Dendritic cell treated with granulocyte-macrophage colony-stimulating factor and Interleukin-4, amounts not matched to agents 40 ng/mL and 50 ng/mL, for 4 days (primary cell): ENCODE measurements at regions of chr22 and their contacts with region 1.

Region 1: GRCh38 chr22:22748297-22748743 is 103.9 kb downstream of the GGTLC2 start:
- H3K4me3 Mint-ChIP-seq: no peak overlapping the region
- H3K27ac Mint-ChIP-seq: no peak overlapping the region
- H3K4me1 Mint-ChIP-seq: peaks cover 18% of the 10 kb centered on the region
- H3K27me3 Mint-ChIP-seq: peaks cover 15% of the 10 kb centered on the region

Region 2: GRCh38 chr22:22593964-22594656 is 154.2 kb before region 1 on chr22:
- intact Hi-C with region 1: loop called (anchors 5 kb)
- H3K4me3 Mint-ChIP-seq: no peak overlapping the region
- H3K27ac Mint-ChIP-seq: no peak overlapping the region
- H3K4me1 Mint-ChIP-seq: peaks cover 5% of the 10 kb centered on the region
- H3K27me3 Mint-ChIP-seq: peaks cover 2% of the 10 kb centered on the region

Region 3: GRCh38 chr22:22666307-22667091 is 81.8 kb before region 1 on chr22:
- intact Hi-C with region 1: no loop called
- H3K4me3 Mint-ChIP-seq: no peak overlapping the region
- H3K27ac Mint-ChIP-seq: no peak overlapping the region
- H3K4me1 Mint-ChIP-seq: no peaks in the 10 kb centered on the region
- H3K27me3 Mint-ChIP-seq: peaks cover 3% of the 10 kb centered on the region

Region 4: DNA sequence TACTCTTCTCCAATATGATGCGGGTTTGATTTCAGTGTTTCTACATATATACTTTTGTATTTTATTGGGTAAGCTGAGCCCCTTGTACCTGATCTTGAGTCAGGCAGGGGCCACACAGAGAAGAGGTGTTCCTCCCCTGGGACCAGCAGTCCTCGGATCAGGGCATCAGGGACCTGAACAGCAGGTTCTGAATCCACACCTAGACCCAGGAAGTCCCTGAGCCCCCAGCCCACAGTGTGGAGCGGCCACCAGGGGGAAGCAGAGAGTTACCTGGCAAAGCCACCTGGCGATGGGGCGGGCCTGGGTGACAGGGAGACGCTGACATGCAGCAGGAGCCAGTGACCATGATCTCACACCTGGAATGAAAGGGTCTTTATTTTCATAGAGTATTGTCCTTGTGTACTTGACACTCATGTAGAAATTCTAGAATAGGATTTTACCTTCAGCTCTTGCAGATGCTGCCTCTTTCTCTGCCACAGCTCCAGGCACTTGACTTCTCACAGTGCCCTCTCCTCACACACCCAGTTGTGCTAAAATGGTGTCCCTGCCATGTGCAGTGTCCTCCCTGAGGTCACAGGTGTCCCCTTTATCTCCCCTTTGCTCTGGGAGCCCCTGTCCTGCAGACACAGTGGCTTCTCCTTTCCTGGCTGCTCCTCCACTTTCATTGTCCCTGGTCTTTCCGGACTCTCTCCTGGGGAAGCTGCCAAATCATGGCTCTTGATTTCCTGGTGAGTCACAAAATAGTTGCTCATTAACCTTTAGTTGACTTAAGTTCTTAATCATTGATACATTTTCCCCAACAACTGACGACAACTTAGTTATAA is 55.4 kb before region 1 on chr22:
- intact Hi-C with region 1: loop called (anchors 10 kb)
- H3K4me3 Mint-ChIP-seq: no peak overlapping the region
- H3K27ac Mint-ChIP-seq: no peak overlapping the region
- H3K4me1 Mint-ChIP-seq: peaks cover 17% of the 10 kb centered on the region
- H3K27me3 Mint-ChIP-seq: no peaks in the 10 kb centered on the region

Region 5: GRCh38 chr22:22710719-22711531 is 37.4 kb before region 1 on chr22:
- intact Hi-C with region 1: loop called (anchors 5 kb)
- H3K4me3 Mint-ChIP-seq: no peak overlapping the region
- H3K27ac Mint-ChIP-seq: peak overlapping the region; percentile 6
- H3K4me1 Mint-ChIP-seq: peaks cover 67% of the 10 kb centered on the region
- H3K27me3 Mint-ChIP-seq: peaks cover 13% of the 10 kb centered on the region

Region 6: GRCh38 chr22:22773979-22774604 is 25.8 kb after region 1 on chr22:
- intact Hi-C with region 1: no loop called
- H3K4me3 Mint-ChIP-seq: no peak overlapping the region
- H3K27ac Mint-ChIP-seq: peak overlapping the region; percentile 40
- H3K4me1 Mint-ChIP-seq: peaks cover 44% of the 10 kb centered on the region
- H3K27me3 Mint-ChIP-seq: peaks cover 13% of the 10 kb centered on the region